MCF 10A (cell line): ENCODE measurements at regions of chr10 and their contacts with region 1.

Region 1: GRCh38 chr10:61284222-61284890 is 168.8 kb downstream of the TMEM26 start:
- DNase-seq: peak; percentile 63
- H3K4me3 Mint-ChIP-seq: no peak overlapping the region
- H3K27ac Mint-ChIP-seq: no peak overlapping the region
- H3K4me1 Mint-ChIP-seq: peaks cover 7% of the 10 kb centered on the region
- H3K27me3 Mint-ChIP-seq: no peaks in the 10 kb centered on the region
- CTCF ChIP-seq: peak; percentile 53

Region 2: GRCh38 chr10:59678884-59679301 is 1605.5 kb before region 1 on chr10:
- CTCF ChIA-PET with region 1: no interaction called
- POLR2A ChIA-PET with region 1: no interaction called
- intact Hi-C with region 1: no loop called
- DNase-seq: no peak
- H3K4me3 Mint-ChIP-seq: no peak overlapping the region
- H3K27ac Mint-ChIP-seq: no peak overlapping the region
- H3K4me1 Mint-ChIP-seq: peaks cover 4% of the 10 kb centered on the region
- H3K27me3 Mint-ChIP-seq: no peaks in the 10 kb centered on the region
- CTCF ChIP-seq: no peak

Region 3: GRCh38 chr10:60816628-60817397 is 467.5 kb before region 1 on chr10:
- CTCF ChIA-PET with region 1: interaction called, 5 read pairs
- POLR2A ChIA-PET with region 1: no interaction called
- intact Hi-C with region 1: loop called (anchors 1 kb)
- DNase-seq: peak; percentile 81
- H3K4me3 Mint-ChIP-seq: no peak overlapping the region
- H3K27ac Mint-ChIP-seq: no peak overlapping the region
- H3K4me1 Mint-ChIP-seq: no peaks in the 10 kb centered on the region
- H3K27me3 Mint-ChIP-seq: no peaks in the 10 kb centered on the region
- CTCF ChIP-seq: peak; percentile 72

Region 4: DNA sequence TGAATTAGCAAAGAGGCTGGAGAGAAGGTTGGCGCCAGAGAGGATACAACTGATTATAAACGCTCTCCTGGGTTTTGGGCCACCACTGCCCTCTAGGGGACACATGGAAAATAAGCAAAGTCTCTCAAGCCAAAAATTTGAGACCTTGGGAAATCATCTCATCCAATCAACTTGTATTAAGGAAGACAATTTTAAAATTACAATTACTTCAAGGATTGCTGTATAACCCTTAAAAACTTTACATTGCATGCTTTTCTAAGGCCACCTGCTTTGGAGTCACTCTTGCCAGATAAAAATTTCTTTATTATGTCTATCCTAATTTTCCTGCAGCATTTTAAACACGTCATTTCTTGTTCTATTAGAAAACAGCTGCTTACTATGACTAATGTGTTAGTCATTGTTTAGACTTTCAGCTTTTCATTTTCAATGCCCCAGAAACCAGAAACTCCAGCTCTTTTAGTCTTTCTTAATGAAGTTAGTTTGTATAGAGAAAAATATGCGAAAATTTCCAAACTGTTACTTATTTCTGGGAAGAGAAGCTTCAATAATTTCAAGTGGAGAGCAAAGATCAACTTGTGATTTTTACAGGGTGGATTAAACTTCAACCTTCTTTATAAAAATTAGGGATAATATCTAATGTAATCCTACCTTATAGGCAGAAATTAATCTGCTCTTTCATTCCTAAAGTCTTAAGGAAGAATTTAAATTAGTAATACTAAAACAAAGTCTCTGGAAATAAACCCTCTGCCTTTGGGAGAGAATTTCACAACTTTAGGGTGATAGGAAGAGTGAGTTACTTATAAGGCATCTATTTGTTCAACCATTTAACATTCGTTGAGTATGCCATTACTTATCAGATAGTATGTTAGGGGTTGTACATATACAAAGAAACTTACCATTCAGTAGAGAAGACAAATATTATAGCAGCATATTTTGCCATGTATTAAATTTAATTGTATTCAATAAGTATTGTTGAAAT is 319.8 kb before region 1 on chr10:
- CTCF ChIA-PET with region 1: no interaction called
- POLR2A ChIA-PET with region 1: no interaction called
- intact Hi-C with region 1: loop called (anchors 1 kb)
- DNase-seq: peak; percentile 90
- H3K4me3 Mint-ChIP-seq: peak overlapping the region; percentile 37
- H3K27ac Mint-ChIP-seq: peak overlapping the region; percentile 97
- H3K4me1 Mint-ChIP-seq: peaks cover 19% of the 10 kb centered on the region
- H3K27me3 Mint-ChIP-seq: no peaks in the 10 kb centered on the region
- CTCF ChIP-seq: peak; percentile 75

Region 5: DNA sequence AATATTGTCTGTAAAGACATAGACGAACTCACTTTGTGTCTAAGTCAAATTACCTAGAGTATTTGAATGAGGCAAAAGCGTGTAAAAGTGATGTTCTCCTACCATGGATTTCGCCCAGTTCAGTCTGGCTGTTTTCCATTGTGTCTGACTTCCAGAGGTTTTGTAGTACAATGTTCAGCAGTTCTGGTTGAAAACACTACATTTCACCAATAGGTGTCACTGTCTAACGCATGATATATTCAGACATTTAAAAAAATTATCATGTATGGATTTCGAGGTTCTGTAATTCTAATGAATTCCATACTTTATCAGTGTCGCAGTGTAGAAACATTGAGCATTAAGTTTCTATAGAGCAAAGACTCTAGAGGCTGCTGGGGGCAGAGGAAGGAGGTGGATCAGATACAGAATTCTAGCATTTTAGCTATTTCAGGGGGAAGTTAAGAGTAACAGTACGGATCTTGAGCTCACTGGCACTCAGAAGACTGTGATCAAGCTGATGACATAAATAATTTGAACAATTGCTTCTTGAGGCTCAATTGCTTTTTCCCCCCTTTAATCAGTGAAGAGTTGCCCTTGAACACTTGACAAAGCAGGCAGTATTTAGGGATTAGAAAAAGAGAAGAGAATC is 143.5 kb before region 1 on chr10:
- CTCF ChIA-PET with region 1: interaction called, 9 read pairs
- POLR2A ChIA-PET with region 1: no interaction called
- intact Hi-C with region 1: loop called (anchors 1 kb)
- DNase-seq: peak; percentile 70
- H3K4me3 Mint-ChIP-seq: no peak overlapping the region
- H3K27ac Mint-ChIP-seq: no peak overlapping the region
- H3K4me1 Mint-ChIP-seq: peaks cover 11% of the 10 kb centered on the region
- H3K27me3 Mint-ChIP-seq: no peaks in the 10 kb centered on the region
- CTCF ChIP-seq: peak; percentile 62

Region 6: DNA sequence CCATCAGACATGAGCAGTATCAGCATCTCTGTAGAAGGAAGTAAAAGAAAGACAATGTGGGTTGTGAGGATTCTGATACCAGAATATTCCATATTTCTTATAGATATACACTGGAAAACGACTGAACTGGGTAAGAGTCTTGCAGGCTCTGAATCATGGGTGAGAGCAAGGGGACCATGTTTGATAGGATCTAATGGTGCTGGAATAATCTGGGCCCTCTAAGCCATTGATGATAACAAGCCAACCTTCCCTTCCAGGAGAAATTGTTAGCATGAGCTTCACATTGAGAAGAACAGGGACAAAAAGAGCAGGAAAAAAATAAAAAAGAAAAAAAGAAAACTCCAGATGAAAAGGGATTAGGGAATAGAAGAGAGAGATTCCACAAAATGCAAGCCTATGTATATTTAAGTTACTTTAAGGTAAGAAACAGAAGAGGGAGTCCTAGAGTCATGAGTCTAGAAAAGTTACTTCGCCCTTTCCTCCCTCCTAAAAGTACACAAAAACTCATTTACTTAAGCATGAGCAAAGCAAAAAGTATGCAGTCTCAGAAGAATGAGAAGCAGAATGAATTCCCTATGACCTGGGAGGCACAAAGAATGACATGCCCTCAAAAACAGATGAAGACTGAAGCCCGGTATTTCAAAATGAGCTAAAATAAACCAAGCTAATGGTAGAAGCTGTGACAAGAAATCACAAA is 13.1 kb before region 1 on chr10:
- CTCF ChIA-PET with region 1: interaction called, 13 read pairs
- POLR2A ChIA-PET with region 1: no interaction called
- intact Hi-C with region 1: no loop called
- DNase-seq: peak; percentile 47
- H3K4me3 Mint-ChIP-seq: no peak overlapping the region
- H3K27ac Mint-ChIP-seq: peak overlapping the region; percentile 39
- H3K4me1 Mint-ChIP-seq: peaks cover 10% of the 10 kb centered on the region
- H3K27me3 Mint-ChIP-seq: no peaks in the 10 kb centered on the region
- CTCF ChIP-seq: peak; percentile 27